Caco-2 (cell line): ENCODE measurements at regions of chr20 and their contacts with region 1.

Region 1: GRCh38 chr20:58650776-58651558 is at the start of gene STX16:
- DNase-seq: peak; percentile 97 to 98
- H3K4me3 ChIP-seq: peak within 1 kb of the TSS; percentile 69
- H3K4me3 Mint-ChIP-seq: peak within 1 kb of the TSS; percentile 88
- H3K27ac Mint-ChIP-seq: peak within 1 kb of the TSS; percentile 91
- H3K4me1 ChIP-seq: peaks cover 23% of the 10 kb centered on the region
- H3K4me1 Mint-ChIP-seq: peaks cover 16% of the 10 kb centered on the region
- H3K27me3 ChIP-seq: no peaks in the 10 kb centered on the region
- H3K27me3 Mint-ChIP-seq: no peaks in the 10 kb centered on the region
- CTCF ChIP-seq: peak; percentile 88 to 96
- total RNA-seq, gene STX16: 82.2 and 97.0 TPM in 2 replicates

Region 2: DNA sequence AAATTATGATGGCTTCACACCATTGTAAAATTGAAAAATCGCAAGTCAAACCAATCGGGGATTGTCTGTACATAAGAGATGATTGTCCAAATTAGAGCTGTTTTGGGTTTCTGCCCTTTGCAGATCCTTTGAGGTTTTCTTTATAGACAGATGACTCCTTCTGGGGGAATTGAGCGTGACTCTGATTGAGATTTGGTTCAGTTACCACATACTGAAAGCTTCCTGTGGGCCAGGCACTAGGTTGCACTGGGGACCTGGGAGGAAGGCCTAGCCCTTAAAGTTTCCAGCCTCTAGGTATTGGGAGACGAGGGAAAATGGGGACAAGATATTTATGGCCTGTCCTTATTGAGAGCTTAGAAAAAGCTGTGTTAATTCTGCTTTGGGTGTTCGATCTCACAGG is 252.7 kb before region 1 on chr20:
- CTCF ChIA-PET with region 1: no interaction called
- POLR2A ChIA-PET with region 1: no interaction called
- intact Hi-C with region 1: no loop called
- DNase-seq: no peak
- H3K4me3 ChIP-seq: no peak overlapping the region
- H3K4me3 Mint-ChIP-seq: no peak overlapping the region
- H3K27ac Mint-ChIP-seq: no peak overlapping the region
- H3K4me1 ChIP-seq: peaks cover 23% of the 10 kb centered on the region
- H3K4me1 Mint-ChIP-seq: peaks cover 19% of the 10 kb centered on the region
- H3K27me3 ChIP-seq: no peaks in the 10 kb centered on the region
- H3K27me3 Mint-ChIP-seq: no peaks in the 10 kb centered on the region
- CTCF ChIP-seq: no peak

Region 3: GRCh38 chr20:58420798-58421496 is 230.0 kb before region 1 on chr20:
- CTCF ChIA-PET with region 1: interaction called, 10 read pairs
- POLR2A ChIA-PET with region 1: interaction called, 5 read pairs
- intact Hi-C with region 1: no loop called
- DNase-seq: peak in 1 of 2 experiments; percentile 28
- H3K4me3 ChIP-seq: no peak overlapping the region
- H3K4me3 Mint-ChIP-seq: peak overlapping the region; percentile 50
- H3K27ac Mint-ChIP-seq: peak overlapping the region; percentile 89
- H3K4me1 ChIP-seq: peaks cover 65% of the 10 kb centered on the region
- H3K4me1 Mint-ChIP-seq: peaks cover 70% of the 10 kb centered on the region
- H3K27me3 ChIP-seq: no peaks in the 10 kb centered on the region
- H3K27me3 Mint-ChIP-seq: no peaks in the 10 kb centered on the region
- CTCF ChIP-seq: no peak

Region 4: DNA sequence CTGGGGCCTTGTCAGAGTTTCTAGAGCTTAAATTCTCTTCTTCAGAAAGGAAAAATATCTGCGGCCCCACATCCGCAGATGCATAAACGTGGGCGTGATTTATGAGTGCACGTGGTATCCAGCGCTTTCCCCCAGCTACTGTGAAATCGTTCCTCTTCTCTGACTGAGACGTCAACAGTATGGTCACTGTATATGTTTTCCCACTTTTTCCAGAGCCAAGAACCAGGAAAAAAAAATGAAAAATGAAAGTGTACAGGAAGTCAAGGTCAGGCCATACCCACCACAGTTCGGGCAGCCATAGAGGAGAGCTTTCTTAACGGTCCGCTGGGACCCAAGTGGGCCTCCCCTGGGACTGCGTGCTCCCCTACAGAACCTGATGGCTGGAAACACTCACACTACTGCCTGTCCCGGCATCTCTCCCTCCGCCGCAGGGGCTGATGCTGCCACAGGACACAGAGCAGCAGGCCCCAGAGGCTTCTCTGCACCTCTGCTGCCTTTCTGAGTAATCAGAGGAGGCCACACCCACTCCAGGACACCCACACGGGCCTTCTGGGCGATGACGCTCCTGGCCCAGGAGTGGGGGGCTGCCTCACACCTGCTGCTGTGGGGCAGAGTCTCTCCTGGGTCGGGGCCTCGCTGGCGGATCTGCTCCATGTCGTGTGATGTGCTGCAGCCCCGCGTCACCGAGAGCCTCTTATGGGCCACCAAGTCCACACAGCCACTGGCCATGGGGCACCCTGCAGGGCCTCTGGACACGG is 16.3 kb before region 1 on chr20:
- CTCF ChIA-PET with region 1: interaction called, 11 read pairs
- POLR2A ChIA-PET with region 1: no interaction called
- intact Hi-C with region 1: no loop called
- DNase-seq: peak in 1 of 2 experiments; percentile 36
- H3K4me3 ChIP-seq: no peak overlapping the region
- H3K4me3 Mint-ChIP-seq: no peak overlapping the region
- H3K27ac Mint-ChIP-seq: no peak overlapping the region
- H3K4me1 ChIP-seq: no peaks in the 10 kb centered on the region
- H3K4me1 Mint-ChIP-seq: no peaks in the 10 kb centered on the region
- H3K27me3 ChIP-seq: no peaks in the 10 kb centered on the region; the same call in none of the 2 replicates
- H3K27me3 Mint-ChIP-seq: peaks cover 5% of the 10 kb centered on the region
- CTCF ChIP-seq: no peak

Region 5: DNA sequence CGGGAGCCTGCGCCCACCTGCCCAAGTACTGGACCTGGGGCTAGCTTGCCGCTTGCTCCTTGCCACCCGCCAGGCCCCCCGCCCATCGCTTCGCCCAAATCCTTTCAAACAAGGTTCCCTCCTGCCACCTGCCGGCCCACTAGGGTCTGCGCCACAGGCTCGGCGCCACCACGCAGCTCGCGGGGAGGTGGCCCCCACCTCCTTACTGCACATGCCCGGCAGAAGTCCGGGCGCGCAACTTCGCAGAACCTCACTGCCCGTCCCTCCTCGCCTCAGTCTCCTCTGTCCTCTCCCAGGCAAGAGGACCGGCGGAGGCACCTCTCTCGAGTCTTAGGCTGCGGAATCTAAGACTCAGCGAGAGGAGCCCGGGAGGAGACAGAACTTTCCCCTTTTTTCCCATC is 188.5 kb after region 1 on chr20:
- CTCF ChIA-PET with region 1: interaction called, 32 read pairs
- POLR2A ChIA-PET with region 1: interaction called, 5 read pairs
- intact Hi-C with region 1: loop called (anchors 2 kb)
- DNase-seq: peak; percentile 85 to 86
- H3K4me3 ChIP-seq: peak overlapping the region; percentile 26
- H3K4me3 Mint-ChIP-seq: peak overlapping the region; percentile 69
- H3K27ac Mint-ChIP-seq: no peak overlapping the region
- H3K4me1 ChIP-seq: no peaks in the 10 kb centered on the region
- H3K4me1 Mint-ChIP-seq: no peaks in the 10 kb centered on the region
- H3K27me3 ChIP-seq: no peaks in the 10 kb centered on the region; the same call in none of the 2 replicates
- H3K27me3 Mint-ChIP-seq: peaks cover 39% of the 10 kb centered on the region
- CTCF ChIP-seq: peak; percentile 94 to 97

Region 6: GRCh38 chr20:58973179-58973578 is 322.2 kb after region 1 on chr20:
- CTCF ChIA-PET with region 1: no interaction called
- POLR2A ChIA-PET with region 1: interaction called, 10 read pairs
- intact Hi-C with region 1: no loop called
- DNase-seq: peak in 1 of 2 experiments; percentile 27
- H3K4me3 ChIP-seq: no peak overlapping the region
- H3K4me3 Mint-ChIP-seq: no peak overlapping the region
- H3K27ac Mint-ChIP-seq: no peak overlapping the region
- H3K4me1 ChIP-seq: no peaks in the 10 kb centered on the region
- H3K4me1 Mint-ChIP-seq: no peaks in the 10 kb centered on the region
- H3K27me3 ChIP-seq: no peaks in the 10 kb centered on the region
- H3K27me3 Mint-ChIP-seq: peaks cover 6% of the 10 kb centered on the region
- CTCF ChIP-seq: no peak

Region 7: GRCh38 chr20:59063358-59064213 is 412.6 kb after region 1 on chr20:
- CTCF ChIA-PET with region 1: no interaction called
- POLR2A ChIA-PET with region 1: no interaction called
- intact Hi-C with region 1: no loop called
- DNase-seq: no peak
- H3K4me3 ChIP-seq: no peak overlapping the region
- H3K4me3 Mint-ChIP-seq: no peak overlapping the region
- H3K27ac Mint-ChIP-seq: no peak overlapping the region
- H3K4me1 ChIP-seq: no peaks in the 10 kb centered on the region
- H3K4me1 Mint-ChIP-seq: peaks cover 7% of the 10 kb centered on the region
- H3K27me3 ChIP-seq: peaks cover 1% of the 10 kb centered on the region; the same call in 1 of the 2 replicates
- H3K27me3 Mint-ChIP-seq: peaks cover 15% of the 10 kb centered on the region
- CTCF ChIP-seq: no peak